GM10248 (cell line): ENCODE measurements at regions of chr2 and their contacts with region 1.

Region 1: DNA sequence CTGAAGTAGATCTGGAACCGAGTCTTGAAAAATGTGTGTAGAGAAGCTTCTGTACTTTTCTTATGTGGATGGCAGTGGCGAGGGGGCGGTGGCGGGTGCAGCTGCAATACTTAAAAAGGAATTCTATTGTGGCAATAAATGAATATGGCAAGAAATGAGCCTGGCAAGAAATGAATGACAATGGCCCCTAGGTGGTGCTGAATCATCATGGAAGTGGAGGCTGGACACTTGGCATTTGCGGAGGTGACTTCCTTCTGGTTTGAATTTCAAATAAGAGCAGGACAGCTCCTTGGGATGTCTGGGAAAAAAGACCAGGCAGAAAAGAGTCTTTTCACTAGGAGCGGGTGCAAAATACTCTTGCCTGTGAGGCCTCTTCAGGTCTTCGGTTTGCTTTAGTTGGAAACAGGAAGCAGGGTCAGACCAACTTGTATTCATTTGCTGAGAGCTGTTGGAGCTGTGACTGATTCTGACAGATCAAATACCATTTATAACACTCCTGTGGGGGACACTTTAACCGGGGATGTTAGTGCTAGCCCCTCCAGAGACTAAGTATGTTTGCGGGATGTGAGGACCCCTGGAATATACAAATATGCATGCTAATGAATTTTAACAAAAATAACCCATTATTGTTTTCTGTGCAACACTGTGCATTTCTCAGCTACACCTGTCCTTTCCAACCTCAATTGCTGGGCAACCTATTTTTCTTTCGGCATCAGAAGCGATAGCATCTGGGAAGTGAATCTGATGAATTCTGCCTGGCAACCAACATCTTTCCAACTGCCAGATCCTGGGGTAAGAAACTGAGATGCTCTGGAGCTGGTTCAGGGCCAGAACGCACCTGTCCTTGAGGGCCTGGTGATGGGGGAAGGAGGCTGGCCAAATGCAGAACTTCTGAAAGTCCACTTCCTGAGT is 35.4 kb downstream of the FASTKD2 start:
- DNase-seq: peak; percentile 48
- CTCF ChIP-seq: peak; percentile 66

Region 2: DNA sequence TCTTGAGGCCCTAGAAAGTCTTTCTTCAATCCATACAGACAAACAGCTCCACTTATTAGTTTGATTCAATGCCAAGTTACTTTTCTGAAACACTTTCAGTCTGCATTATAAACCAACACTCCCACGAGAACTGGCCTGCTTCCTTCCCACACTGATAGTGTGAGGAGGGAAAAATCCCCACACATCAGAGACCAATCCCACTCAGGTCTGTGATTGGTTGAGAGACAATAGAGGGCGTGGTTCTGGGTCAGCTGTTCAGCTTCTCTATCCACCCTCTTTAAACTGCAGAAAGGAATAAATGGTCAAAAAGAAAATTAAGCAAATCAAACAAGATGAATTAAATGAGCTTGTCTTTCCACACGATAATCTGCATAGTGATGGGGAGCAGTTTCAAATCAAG is 966.0 kb before region 1 on chr2:
- CTCF ChIA-PET with region 1: no interaction called
- POLR2A ChIA-PET with region 1: no interaction called
- DNase-seq: no peak
- CTCF ChIP-seq: no peak

Region 3: GRCh38 chr2:206756816-206757215 is 43.9 kb before region 1 on chr2:
- CTCF ChIA-PET with region 1: no interaction called
- POLR2A ChIA-PET with region 1: no interaction called
- DNase-seq: no peak
- CTCF ChIP-seq: no peak

Region 4: DNA sequence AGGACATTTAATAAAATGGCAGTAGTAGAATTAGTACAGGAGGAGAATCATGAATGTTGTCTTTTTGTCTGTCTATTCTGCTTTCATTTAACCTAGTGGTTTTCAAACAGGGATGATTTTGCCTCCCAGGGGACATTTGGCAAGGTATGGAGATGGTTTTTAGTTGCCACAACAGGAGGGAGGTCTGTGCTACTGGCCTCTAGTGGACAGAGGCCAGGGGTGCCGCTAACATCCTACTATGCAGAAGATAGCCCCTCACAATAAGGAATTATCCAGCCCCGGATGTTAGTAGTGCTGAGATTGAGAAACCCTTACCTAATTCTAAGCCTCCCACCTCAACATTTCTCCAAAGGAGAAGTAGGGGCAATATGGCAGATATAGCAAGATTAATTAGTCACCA is 17.0 kb before region 1 on chr2:
- CTCF ChIA-PET with region 1: interaction called, 57 read pairs
- POLR2A ChIA-PET with region 1: no interaction called
- DNase-seq: no peak
- CTCF ChIP-seq: peak; percentile 33

Region 5: DNA sequence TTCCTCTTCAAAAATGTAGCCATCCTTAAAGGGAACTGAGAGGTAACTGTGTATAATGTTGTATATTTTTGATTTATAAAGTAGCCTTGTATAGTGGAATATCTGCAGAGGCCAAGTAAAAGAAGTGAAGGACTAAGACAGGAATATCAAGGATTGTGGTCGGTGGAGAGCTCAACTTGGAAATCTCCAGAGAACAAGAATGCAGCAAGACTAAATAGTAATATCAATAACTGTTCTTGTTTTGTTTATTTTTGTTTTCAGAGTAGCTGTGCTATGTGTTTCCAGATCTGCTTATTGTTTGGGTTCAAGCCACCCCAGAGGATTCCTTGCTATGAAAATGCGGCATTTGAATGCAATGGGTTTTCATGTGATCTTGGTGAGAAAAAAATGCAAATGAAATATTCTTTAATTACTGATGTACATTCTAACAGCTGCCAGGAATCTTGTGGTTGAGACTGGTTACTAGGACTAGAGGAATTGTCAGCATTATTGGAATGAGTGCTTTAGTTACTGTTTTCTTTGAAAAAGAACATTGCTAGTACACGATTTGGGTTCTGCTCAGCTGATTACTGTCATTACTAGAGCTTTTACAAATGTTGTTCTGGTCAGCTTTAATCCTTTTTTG is 10.3 kb before region 1 on chr2:
- CTCF ChIA-PET with region 1: interaction called, 57 read pairs
- POLR2A ChIA-PET with region 1: no interaction called
- DNase-seq: no peak
- CTCF ChIP-seq: no peak

Region 6: GRCh38 chr2:207467716-207468347 is 667.1 kb after region 1 on chr2:
- CTCF ChIA-PET with region 1: interaction called, 24 read pairs
- POLR2A ChIA-PET with region 1: no interaction called
- DNase-seq: peak; percentile 23
- CTCF ChIP-seq: no peak

Region 7: GRCh38 chr2:207473049-207473930 is 672.5 kb after region 1 on chr2:
- CTCF ChIA-PET with region 1: interaction called, 24 read pairs
- POLR2A ChIA-PET with region 1: no interaction called
- DNase-seq: peak; percentile 30
- CTCF ChIP-seq: peak; percentile 77